Activated B cell treated with CpG ODN at 0.5 μM for 24 hours (primary cell): ENCODE measurements at regions of chr16 and their contacts with region 1.

Region 1: DNA sequence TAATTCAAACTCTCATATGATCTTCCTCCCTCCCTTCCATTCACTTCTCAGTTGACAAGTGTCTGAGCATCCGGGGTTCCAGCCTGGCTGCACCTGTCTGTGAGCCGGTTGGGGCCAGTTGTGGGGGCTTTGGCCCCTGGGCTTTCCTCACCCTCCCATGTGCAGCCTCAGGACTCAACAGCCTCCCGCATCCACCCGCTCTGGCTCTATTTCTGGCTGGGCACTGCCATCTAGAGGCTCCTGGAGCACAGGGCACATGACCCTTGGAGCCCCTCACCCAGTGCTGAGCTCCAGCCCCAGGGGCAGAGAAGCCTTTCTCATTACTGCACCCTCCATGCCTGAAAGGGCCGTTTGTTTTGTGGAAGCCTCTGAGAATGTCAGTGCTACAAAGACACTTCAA is 43.3 kb downstream of the HAPSTR1 start:
- DNase-seq: peak; percentile 52
- ATAC-seq: peak; percentile 73
- H3K4me3 Mint-ChIP-seq: peak overlapping the region; percentile 15
- H3K27ac Mint-ChIP-seq: peak overlapping the region; percentile 53
- H3K4me1 Mint-ChIP-seq: peaks cover 38% of the 10 kb centered on the region
- H3K27me3 Mint-ChIP-seq: no peaks in the 10 kb centered on the region
- CTCF ChIP-seq: peak; percentile 41

Region 2: DNA sequence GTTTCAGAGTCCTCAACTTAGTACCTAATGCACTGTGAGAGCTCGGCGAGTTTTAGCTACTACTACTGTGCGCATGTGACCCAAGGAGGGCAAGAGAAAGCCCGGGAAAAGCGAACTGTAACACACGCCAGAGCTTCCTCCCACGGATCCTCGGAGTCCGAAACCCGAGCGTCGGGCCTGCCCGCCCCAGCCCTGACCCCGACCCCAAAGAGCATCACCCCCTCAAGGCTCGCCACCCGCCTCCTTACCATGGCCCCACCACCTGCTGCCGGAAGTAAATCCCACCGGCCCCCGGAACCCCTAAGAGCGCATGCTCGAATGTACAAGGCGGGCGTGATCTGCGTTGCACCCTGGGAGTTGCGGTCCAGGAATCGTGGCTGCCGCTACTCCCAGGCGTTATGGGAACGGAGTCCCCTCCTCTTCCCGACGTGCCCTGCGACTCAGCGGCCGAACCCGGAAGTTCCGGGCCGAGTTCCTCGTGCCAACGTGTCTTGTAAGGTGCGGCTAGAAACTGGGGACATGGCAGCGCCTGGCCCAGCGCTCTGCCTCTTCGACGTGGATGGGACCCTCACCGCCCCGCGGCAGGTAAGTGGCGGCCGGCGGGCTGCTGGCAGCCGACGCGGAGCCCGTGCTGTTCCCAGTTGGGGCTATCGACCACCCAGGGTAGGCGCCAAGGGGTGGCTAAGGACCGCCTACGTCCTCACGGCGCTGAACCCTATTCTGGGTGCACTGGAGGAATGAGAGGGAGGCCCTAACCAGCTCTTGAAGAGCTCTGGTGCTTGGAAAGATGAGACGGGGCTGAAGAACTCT is 337.2 kb before region 1 on chr16 and contains the starts of genes PMM2 and TMEM186:
- CTCF ChIA-PET with region 1: interaction called, 5 read pairs
- POLR2A ChIA-PET with region 1: interaction called, 6 read pairs
- intact Hi-C with region 1: loop called (anchors 5 kb)
- DNase-seq: peak; percentile 91
- ATAC-seq: peak; percentile 96
- H3K4me3 Mint-ChIP-seq: peak within 1 kb of the TSS; percentile 98
- H3K27ac Mint-ChIP-seq: peak within 1 kb of the TSS; percentile 87
- H3K4me1 Mint-ChIP-seq: peaks cover 36% of the 10 kb centered on the region
- H3K27me3 Mint-ChIP-seq: no peaks in the 10 kb centered on the region
- CTCF ChIP-seq: no peak
- total RNA-seq, gene PMM2: 57.4 and 61.1 TPM in 2 replicates
- total RNA-seq, gene TMEM186: 10.6 and 13.0 TPM in 2 replicates

Region 3: DNA sequence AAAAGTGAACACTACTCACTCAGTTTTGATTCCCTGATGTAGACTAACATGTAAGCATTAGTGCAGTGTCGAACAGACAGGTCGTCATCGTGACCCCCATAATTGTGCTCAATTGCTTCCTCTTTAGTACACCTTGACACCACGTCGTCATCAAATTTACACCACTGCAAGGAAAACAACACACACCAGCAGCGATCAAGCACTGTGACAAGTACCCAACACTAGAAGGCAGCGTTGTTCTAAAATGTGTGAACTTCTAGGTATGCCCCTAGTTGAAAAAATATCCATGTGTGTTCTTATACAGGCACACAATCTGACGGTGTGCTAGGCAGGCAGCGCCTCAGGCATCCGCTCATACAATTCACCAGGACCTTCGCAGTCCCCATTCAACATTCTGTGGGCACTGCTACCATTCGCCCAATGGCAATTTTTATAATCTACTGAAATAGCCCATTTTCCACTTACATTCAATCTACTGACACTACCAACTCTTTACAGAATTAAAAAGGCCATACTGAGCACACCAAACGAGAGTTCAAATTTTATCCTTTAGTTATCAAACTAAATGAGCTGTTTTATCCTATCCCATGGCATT is 229.5 kb before region 1 on chr16:
- CTCF ChIA-PET with region 1: interaction called, 3 read pairs
- POLR2A ChIA-PET with region 1: no interaction called
- intact Hi-C with region 1: loop called (anchors 1 kb)
- DNase-seq: no peak
- ATAC-seq: peak; percentile 68
- H3K4me3 Mint-ChIP-seq: no peak overlapping the region
- H3K27ac Mint-ChIP-seq: no peak overlapping the region
- H3K4me1 Mint-ChIP-seq: no peaks in the 10 kb centered on the region
- H3K27me3 Mint-ChIP-seq: no peaks in the 10 kb centered on the region
- CTCF ChIP-seq: no peak

Region 4: GRCh38 chr16:9008601-9009260 is 126.0 kb before region 1 on chr16:
- CTCF ChIA-PET with region 1: interaction called, 19 read pairs
- POLR2A ChIA-PET with region 1: no interaction called
- intact Hi-C with region 1: loop called (anchors 2 kb)
- DNase-seq: peak; percentile 50
- ATAC-seq: peak; percentile 91
- H3K4me3 Mint-ChIP-seq: peak overlapping the region; percentile 59
- H3K27ac Mint-ChIP-seq: peak overlapping the region; percentile 53
- H3K4me1 Mint-ChIP-seq: peaks cover 8% of the 10 kb centered on the region
- H3K27me3 Mint-ChIP-seq: peaks cover 29% of the 10 kb centered on the region
- CTCF ChIP-seq: no peak

Region 5: GRCh38 chr16:9099131-9099625 is 35.6 kb before region 1 on chr16:
- CTCF ChIA-PET with region 1: interaction called, 10 read pairs
- POLR2A ChIA-PET with region 1: interaction called, 6 read pairs
- intact Hi-C with region 1: no loop called
- DNase-seq: no peak
- ATAC-seq: peak; percentile 31
- H3K4me3 Mint-ChIP-seq: peak overlapping the region; percentile 73
- H3K27ac Mint-ChIP-seq: peak overlapping the region; percentile 84
- H3K4me1 Mint-ChIP-seq: peaks cover 93% of the 10 kb centered on the region
- H3K27me3 Mint-ChIP-seq: no peaks in the 10 kb centered on the region
- CTCF ChIP-seq: no peak

Region 6: GRCh38 chr16:10509534-10510025 is 1374.8 kb after region 1 on chr16:
- CTCF ChIA-PET with region 1: interaction called, 4 read pairs
- POLR2A ChIA-PET with region 1: no interaction called
- intact Hi-C with region 1: loop called (anchors 2 kb)
- DNase-seq: no peak
- ATAC-seq: peak; percentile 96
- H3K4me3 Mint-ChIP-seq: no peak overlapping the region
- H3K27ac Mint-ChIP-seq: peak overlapping the region; percentile 19
- H3K4me1 Mint-ChIP-seq: peaks cover 17% of the 10 kb centered on the region
- H3K27me3 Mint-ChIP-seq: no peaks in the 10 kb centered on the region
- CTCF ChIP-seq: peak; percentile 58